Body of pancreas (tissue), 4 donors: ENCODE measurements at regions of chr10 and their contacts with region 1.

Region 1: DNA sequence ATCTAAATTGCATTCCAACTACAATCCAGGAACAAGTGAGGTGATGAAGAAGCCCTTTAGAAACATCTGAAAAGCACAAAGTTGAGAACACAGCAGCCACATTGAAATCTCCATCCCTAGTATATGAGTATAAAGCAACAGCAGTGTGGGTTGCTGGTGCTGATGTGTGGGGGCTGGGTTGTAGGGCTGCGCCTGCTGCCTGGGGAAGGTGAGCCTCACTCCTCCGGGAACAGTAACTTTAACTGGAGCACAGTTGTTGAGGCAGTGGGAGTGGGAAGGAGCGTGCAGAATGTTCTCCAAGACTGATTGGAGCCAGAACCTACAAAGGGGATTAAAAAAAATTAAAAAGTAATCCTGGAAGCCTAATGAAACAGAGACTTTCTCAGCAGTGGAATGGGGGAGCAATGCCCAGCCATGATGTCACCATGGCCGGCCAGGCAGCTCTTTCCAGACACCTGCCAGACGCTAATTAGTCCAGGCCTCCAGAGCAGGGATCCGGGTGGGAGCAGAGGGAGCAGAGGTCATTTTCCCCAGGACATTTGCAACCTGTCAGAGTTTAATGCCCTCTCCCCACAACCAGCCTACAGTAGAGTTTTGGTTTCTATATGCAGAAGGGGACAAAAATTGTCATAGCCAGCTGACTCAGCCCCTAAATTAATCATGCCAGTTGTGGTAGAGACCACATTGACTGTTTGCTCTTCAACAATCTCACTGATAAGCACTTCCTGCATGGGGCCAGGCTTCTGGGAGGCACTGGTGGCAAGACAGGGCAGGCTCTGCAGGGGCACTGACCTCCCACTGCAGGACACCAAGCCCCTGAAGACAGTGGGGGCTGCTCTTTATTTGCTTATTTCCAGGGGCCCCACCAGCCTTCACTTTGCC is 133.0 kb upstream of the ZNF32 start:
- DNase-seq: peak; percentile 28 to 64 (median 59)
- ATAC-seq: peak; percentile 82
- H3K4me3 ChIP-seq: no peak overlapping the region
- H3K27ac ChIP-seq: peak overlapping the region; percentile 47 to 73 (median 60)
- H3K4me1 ChIP-seq: peaks cover 14% of the 10 kb centered on the region
- H3K27me3 ChIP-seq: no peaks in the 10 kb centered on the region
- CTCF ChIP-seq: no peak
- POLR2A ChIP-seq: no peak

Region 2: GRCh38 chr10:43564091-43564490 is 217.6 kb before region 1 on chr10:
- intact Hi-C with region 1: no loop called
- DNase-seq: no peak
- ATAC-seq: no peak
- H3K4me3 ChIP-seq: no peak overlapping the region
- H3K27ac ChIP-seq: no peak overlapping the region
- H3K4me1 ChIP-seq: no peaks in the 10 kb centered on the region
- H3K27me3 ChIP-seq: no peaks in the 10 kb centered on the region
- CTCF ChIP-seq: no peak
- POLR2A ChIP-seq: no peak

Region 3: GRCh38 chr10:43689955-43690771 is 91.6 kb before region 1 on chr10:
- intact Hi-C with region 1: loop called (anchors 10 kb)
- DNase-seq: peak; percentile 83 to 90 (median 88)
- ATAC-seq: peak; percentile 92
- H3K4me3 ChIP-seq: peak overlapping the region; percentile 29 to 32
- H3K27ac ChIP-seq: peak overlapping the region; percentile 68 to 87 (median 85)
- H3K4me1 ChIP-seq: peaks cover 36% of the 10 kb centered on the region
- H3K27me3 ChIP-seq: no peaks in the 10 kb centered on the region
- CTCF ChIP-seq: peak; percentile 83 to 97 (median 94)
- POLR2A ChIP-seq: peak; percentile 68 to 86 (median 84)